ENCODE measurements at regions of chr14 and their contacts with region 1.

Region 1: DNA sequence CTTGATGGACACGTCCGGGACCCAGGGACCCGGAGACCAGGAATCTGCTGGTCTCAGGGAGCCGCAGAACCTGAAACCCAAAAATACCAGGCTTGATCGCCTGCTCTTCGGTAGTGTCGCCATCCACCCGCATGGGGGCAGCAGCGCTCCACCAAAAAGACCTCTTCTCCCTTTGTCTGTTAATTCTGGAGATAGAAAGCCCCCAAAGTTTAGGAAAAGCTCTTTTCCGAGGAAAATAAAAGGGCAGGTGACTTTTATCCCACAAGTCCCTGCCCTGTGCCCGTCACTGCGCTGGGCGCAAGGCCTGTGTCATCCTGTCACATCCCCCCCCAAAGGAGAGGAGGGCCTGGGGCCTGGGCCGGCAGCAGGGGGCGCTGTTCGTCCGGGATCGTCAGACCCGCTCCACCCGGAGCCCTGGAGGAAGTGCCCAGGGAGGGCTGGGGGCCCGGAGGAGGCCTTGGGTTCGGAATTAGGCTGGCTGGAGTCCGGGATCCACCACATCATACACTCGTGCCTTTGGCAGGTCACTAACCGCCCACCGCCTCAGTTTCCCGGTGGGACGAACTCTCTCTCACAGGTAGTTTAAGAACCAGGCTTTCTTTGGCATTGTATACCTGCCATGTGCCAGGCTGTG is 31.9 kb downstream of the DAD1 start:
- DNase-seq: peak; percentile 94
- H3K4me3 Mint-ChIP-seq: peak overlapping the region; percentile 78
- H3K27ac Mint-ChIP-seq: peak overlapping the region; percentile 99
- H3K4me1 Mint-ChIP-seq: peaks cover 87% of the 10 kb centered on the region
- H3K27me3 Mint-ChIP-seq: peaks cover 4% of the 10 kb centered on the region

Region 2: DNA sequence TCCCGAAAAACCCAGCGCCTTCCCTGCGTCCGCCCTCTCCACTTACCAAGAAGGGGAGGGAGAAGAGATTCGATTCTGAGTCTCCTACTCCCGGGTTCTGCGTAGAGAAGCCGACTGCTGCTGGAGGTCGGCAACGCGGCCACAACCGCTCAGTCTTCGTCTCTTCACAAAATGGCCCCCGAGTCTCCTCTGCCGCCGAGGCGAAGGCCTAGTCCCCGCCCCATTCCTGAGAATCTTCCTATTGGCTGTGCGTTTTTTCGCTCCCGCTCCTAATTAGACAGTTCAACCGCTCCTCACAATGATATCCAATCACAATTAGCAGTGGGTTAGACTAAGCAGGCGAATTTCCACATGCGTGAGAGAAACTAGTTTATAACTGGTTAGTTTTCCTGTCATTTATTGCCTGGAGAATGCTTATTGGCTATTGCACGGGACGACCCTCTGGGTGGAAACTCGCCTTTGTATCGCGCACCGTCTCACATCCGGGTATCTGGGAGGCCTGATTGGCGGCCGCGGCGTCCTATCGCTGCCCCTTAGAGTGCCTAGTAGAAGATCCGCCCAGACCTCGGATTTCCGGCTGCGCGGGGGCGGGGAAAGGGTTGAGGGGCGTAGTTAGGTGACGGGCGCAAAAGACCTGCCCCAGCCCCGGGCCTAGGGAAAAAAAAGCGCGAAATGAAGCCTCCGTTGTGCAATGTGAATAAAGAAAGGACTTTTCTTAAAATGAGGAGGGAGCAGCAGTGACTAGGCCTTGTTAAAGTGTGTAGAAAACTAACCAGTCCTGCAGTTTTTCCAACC is 1287.7 kb before region 1 on chr14 and contains the start of gene HNRNPC:
- CTCF ChIA-PET with region 1: no interaction called
- POLR2A ChIA-PET with region 1: no interaction called
- intact Hi-C with region 1: loop called (anchors 5 kb)
- DNase-seq: peak; percentile 100
- H3K4me3 Mint-ChIP-seq: peak within 1 kb of the TSS; percentile 100
- H3K27ac Mint-ChIP-seq: peak within 1 kb of the TSS; percentile 100
- H3K4me1 Mint-ChIP-seq: peaks cover 24% of the 10 kb centered on the region
- H3K27me3 Mint-ChIP-seq: no peaks in the 10 kb centered on the region
- total RNA-seq, gene HNRNPC: 1,063 to 1,070 TPM

Region 3: DNA sequence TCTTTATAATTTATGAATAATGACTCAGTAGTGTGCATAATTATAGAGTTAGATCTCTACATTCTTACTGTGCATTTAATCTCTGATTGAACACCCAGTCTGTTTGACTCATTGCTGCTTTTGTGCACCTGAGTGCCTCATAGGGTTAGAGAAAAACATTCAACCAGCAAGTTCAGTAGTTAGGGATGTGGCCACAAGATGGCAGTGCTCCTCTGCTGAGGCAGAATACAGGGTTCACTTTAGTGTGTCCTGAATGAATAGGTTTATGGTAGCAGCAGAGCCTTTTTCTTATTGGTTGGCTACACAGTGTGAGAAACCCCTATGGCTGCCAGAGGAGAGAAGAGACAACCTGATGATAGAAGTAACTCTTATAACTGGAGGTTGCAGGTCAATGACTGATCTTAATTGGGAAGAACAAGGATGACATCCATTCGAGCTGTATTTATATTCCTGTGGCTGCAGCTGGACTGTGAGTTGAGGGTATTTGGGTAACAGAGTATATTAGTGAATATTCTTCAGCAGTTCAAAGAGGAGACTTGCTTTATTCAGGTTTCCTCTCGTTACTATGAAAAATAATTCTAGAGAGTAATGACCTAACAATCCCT is 688.6 kb before region 1 on chr14:
- CTCF ChIA-PET with region 1: no interaction called
- POLR2A ChIA-PET with region 1: no interaction called
- intact Hi-C with region 1: loop called (anchors 1 kb)
- DNase-seq: peak; percentile 89
- H3K4me3 Mint-ChIP-seq: peak overlapping the region; percentile 68
- H3K27ac Mint-ChIP-seq: peak overlapping the region; percentile 82
- H3K4me1 Mint-ChIP-seq: peaks cover 41% of the 10 kb centered on the region
- H3K27me3 Mint-ChIP-seq: no peaks in the 10 kb centered on the region

Region 4: GRCh38 chr14:22122227-22122818 is 434.8 kb before region 1 on chr14:
- CTCF ChIA-PET with region 1: interaction called, 4 read pairs
- POLR2A ChIA-PET with region 1: interaction called, 6 read pairs
- intact Hi-C with region 1: loop called (anchors 2 kb)
- DNase-seq: no peak
- H3K4me3 Mint-ChIP-seq: peak overlapping the region; percentile 62
- H3K27ac Mint-ChIP-seq: peak overlapping the region; percentile 89
- H3K4me1 Mint-ChIP-seq: peaks cover 9% of the 10 kb centered on the region
- H3K27me3 Mint-ChIP-seq: no peaks in the 10 kb centered on the region

Region 5: DNA sequence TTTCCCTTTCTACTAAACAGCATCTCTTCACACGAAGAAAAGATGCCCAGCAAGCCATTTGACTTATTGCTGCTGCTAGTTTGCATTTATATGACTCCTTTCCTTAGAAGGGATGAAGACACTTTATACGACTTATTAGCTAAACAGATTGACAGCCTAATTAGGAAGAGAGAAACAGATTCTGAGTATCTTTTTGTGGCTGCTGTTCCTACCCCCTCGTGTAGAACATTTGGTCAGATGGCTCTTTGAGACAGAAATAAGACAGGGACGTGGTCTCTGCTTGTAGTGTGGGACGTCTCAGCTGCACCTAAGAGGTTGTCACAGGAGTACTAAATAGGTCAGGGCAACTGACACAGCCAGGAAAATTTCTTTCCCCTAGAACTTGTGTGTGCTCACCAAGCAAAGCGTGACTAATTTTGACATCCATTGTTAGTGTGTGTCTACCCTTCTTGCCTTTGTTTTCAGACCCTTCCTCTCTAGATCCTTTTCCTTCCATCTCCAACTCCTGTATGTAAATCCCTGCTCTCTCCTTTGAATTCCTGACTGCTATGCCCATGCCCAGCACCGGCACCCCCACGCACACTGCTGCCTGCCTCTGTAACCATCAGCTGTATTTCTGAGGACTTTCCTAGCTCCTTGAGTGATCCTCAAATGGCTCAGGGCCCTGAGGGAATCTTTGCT is 51.3 kb before region 1 on chr14:
- CTCF ChIA-PET with region 1: interaction called, 19 read pairs
- POLR2A ChIA-PET with region 1: interaction called, 71 read pairs
- intact Hi-C with region 1: loop called (anchors 1 kb)
- DNase-seq: no peak
- H3K4me3 Mint-ChIP-seq: peak overlapping the region; percentile 79
- H3K27ac Mint-ChIP-seq: peak overlapping the region; percentile 98
- H3K4me1 Mint-ChIP-seq: peaks cover 35% of the 10 kb centered on the region
- H3K27me3 Mint-ChIP-seq: no peaks in the 10 kb centered on the region

Region 6: DNA sequence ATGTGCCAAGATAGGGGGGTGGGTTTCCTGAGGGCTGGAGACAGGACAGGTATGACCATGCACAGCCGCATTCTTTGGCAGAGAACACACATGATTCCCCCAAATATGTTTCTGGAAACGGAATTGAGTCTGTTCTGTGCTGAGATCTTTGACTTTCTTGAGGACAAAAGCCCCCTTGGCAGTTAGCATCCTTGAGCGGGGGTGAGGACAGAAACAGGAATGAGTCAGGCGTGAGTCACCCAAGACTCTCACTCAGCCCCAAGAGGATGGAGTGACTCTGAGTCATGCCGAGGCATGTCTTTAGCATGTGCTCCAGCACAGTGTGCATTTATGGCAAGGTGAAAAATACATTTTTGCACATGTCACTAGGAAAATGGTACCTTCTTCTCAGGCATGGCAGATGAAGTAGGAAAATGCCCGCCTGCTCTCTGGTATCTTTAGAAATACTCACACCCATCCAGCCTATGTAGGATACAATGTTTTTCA is 20.2 kb before region 1 on chr14:
- CTCF ChIA-PET with region 1: interaction called, 28 read pairs
- POLR2A ChIA-PET with region 1: interaction called, 268 read pairs
- intact Hi-C with region 1: loop called (anchors 1 kb)
- DNase-seq: peak; percentile 92
- H3K4me3 Mint-ChIP-seq: peak overlapping the region; percentile 81
- H3K27ac Mint-ChIP-seq: peak overlapping the region; percentile 99
- H3K4me1 Mint-ChIP-seq: peaks cover 95% of the 10 kb centered on the region
- H3K27me3 Mint-ChIP-seq: no peaks in the 10 kb centered on the region

Region 7: DNA sequence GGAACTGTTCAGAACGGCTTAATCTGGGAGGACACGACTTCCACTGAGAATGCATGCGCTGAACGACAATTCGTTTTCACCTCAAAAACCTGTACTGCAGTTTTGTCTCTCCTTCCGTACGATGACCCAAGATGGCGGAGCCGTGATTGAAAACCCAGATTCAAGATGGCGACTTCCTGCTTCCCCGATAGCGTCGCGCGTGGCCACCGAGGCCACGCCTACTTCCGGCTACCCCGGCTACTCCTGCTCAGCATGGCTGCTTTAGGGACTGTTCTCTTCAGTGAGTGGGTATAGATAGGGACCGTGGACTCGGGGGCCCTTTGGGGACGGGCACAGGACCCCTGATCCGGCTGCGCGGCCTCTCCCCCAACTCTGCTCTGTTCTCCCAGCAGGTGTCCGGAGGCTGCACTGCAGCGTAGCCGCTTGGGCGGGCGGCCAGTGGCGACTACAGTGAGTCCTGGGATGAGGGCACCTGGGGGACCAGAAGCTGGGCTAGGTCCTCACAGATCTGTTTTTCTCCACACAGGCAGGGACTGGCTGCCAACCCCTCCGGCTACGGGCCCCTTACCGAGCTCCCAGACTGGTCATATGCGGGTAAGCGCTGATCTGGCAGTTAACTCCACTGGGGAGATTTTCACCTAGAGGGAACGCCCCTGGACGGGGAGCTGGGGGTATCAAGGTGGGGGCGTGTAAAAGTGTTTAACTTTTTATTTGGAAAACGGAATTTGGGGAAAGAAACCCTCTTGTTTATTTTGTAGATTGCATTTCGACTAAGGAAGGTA is 272.7 kb after region 1 on chr14 and contains the start of gene MRPL52:
- CTCF ChIA-PET with region 1: interaction called, 5 read pairs
- POLR2A ChIA-PET with region 1: interaction called, 3 read pairs
- intact Hi-C with region 1: loop called (anchors 2 kb)
- DNase-seq: peak; percentile 94
- H3K4me3 Mint-ChIP-seq: peak within 1 kb of the TSS; percentile 95
- H3K27ac Mint-ChIP-seq: peak within 1 kb of the TSS; percentile 95
- H3K4me1 Mint-ChIP-seq: peaks cover 26% of the 10 kb centered on the region
- H3K27me3 Mint-ChIP-seq: peaks cover 2% of the 10 kb centered on the region
- total RNA-seq, gene MRPL52: 152 to 156 TPM